Heart right ventricle (tissue), 16 donors: ENCODE measurements at regions of chr3 and their contacts with region 1.

Region 1: GRCh38 chr3:197394464-197395321 is 96.3 kb upstream of the DLG1 start:
- DNase-seq: peak; percentile 51 to 68
- ATAC-seq: peak; percentile 81 to 96 (median 91)
- H3K4me3 ChIP-seq: no peak overlapping the region
- H3K27ac ChIP-seq: peak overlapping the region; percentile 39 to 88 (median 73)
- H3K4me1 ChIP-seq: peaks cover 0 to 32% (median 9%) of the 10 kb centered on the region in 9 donors
- H3K27me3 ChIP-seq: no peaks in the 10 kb centered on the region
- CTCF ChIP-seq: no peak

Region 2: DNA sequence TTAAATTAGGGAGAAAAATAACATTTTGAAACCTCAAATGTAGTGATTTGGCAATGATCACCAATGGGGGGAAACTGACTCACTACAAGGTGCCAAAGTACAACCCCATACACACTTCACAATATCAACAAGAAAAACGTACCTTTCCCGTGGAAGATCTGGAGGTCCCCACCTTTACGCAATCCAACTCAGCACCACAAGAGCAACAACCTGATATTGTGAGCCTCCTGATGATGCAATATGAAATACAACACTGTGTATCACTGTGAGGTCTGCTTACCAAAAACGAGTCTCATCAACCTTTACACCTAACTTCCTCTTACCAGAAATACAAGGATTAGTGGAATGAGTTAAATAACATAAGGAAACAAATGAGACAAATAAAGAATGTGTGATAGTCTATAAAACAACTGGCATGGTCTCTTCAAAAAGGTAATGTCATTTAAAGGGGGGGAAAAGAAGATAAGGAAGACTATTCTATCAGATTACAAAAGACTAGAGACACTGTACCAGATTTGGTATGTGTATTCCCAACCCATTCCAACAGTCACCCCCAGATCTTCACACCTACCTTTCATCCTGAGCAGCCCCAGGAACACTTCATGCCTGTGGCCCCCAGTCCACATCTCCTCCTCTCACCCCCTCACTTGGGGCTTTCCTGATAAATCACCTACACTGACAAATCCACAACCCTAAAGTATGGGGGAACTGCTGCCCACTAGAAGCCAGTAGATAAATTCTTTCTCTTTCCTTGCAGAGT is 124.0 kb before region 1 on chr3:
- intact Hi-C with region 1: no loop called
- DNase-seq: no peak
- ATAC-seq: no peak
- H3K4me3 ChIP-seq: no peak overlapping the region
- H3K27ac ChIP-seq: no peak overlapping the region
- H3K4me1 ChIP-seq: peaks cover 0 to 36% (median 17%) of the 10 kb centered on the region in 9 donors
- H3K27me3 ChIP-seq: no peaks in the 10 kb centered on the region
- CTCF ChIP-seq: no peak

Region 3: GRCh38 chr3:197298341-197298857 is 96.3 kb before region 1 on chr3 and contains the start of gene DLG1:
- intact Hi-C with region 1: loop called in 1 of 10 experiments (anchors 5 kb)
- DNase-seq: peak; percentile 88
- ATAC-seq: peak; percentile 79 to 94 (median 92)
- H3K4me3 ChIP-seq: peak within 1 kb of the TSS; percentile 78 to 100 (median 92)
- H3K27ac ChIP-seq: peak within 1 kb of the TSS; percentile 80 to 96 (median 94)
- H3K4me1 ChIP-seq: peaks cover 5 to 43% (median 24%) of the 10 kb centered on the region in 9 donors
- H3K27me3 ChIP-seq: no peaks in the 10 kb centered on the region
- CTCF ChIP-seq: no peak
- total RNA-seq, gene DLG1: 29.0 to 97.4 (median 57.6) TPM